ENCODE measurements at regions of chr5 and their contacts with region 1.

Region 1: GRCh38 chr5:174311531-174312269 is 266.2 kb downstream of the NSG2 start:
- DNase-seq: peak; percentile 82
- ATAC-seq: peak; percentile 77
- H3K4me3 Mint-ChIP-seq: no peak overlapping the region
- H3K27ac Mint-ChIP-seq: no peak overlapping the region
- H3K4me1 Mint-ChIP-seq: no peaks in the 10 kb centered on the region
- H3K27me3 Mint-ChIP-seq: peaks cover 27% of the 10 kb centered on the region

Region 2: DNA sequence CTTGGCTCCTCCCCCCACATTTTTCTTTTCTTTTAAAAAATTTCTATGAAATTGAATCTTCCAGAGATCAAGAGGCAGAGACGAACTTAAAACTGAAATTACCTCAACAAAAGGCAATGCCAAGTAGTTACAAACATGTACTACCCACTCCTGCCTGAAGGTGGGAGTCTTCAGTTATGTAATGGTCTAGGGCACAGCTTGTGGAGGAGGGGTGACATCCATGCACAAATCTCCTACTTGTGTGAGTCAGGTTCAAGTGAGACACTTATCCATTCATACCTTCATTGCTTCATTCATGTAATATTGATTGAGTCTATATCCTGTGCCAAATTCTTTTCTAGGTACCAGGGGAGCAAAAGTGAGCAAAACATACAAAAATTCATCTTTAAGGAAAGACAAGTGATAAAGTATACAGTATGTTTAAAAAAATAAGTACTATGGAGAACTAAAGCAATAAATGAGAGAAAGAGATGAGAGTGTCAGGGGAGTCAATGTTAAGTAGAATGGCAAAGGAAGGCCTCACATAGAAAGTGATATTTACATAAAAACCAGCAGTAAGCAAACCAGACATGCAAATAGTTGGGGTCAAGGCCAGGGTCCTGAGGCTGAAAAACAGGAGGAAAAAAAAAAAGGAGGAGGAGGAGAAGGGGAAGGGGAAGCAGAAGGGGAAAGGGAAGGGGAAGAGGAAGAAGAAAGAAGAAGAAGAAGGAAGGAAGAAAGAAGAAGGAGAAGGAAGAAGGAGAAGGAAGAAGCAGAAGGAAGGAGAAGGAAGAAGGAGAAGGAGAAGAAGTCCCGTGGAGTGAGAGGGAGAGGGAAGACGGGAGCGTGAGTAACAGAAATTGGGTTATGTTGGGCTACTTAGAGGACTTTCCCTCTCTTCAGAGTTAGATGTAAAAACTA is 291.1 kb before region 1 on chr5:
- CTCF ChIA-PET with region 1: interaction called, 6 read pairs
- POLR2A ChIA-PET with region 1: no interaction called
- intact Hi-C with region 1: loop called (anchors 1 kb)
- DNase-seq: peak; percentile 38
- ATAC-seq: no peak
- H3K4me3 Mint-ChIP-seq: no peak overlapping the region
- H3K27ac Mint-ChIP-seq: no peak overlapping the region
- H3K4me1 Mint-ChIP-seq: no peaks in the 10 kb centered on the region
- H3K27me3 Mint-ChIP-seq: peaks cover 27% of the 10 kb centered on the region

Region 3: DNA sequence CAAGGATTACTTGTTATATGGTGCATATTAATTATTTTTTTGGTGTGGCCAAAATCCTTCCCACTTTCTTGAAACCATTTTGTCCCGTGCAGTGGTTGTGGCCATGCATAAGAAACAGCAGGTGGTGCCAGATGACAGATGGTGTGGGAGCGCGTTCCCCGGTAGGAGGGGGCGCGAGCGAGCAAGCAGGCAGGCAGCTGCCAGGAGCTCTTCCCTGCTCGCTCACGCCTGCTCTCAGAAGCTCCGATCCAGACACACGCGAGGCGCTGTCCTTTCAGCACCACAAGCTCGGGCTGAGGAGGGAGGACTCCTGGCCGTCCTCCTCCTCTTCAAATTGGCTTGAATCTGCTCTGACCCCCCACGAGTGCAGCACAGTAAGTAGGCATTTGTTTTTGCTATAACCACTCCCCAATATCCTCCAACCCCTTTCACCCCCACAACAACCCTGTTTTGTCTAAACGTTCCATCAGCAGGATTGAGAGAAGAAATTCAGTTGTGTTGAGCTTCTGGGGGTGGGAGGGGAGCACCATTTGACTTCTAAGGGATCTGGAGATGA is 266.2 kb before region 1 on chr5 and contains the start of gene NSG2:
- CTCF ChIA-PET with region 1: interaction called, 9 read pairs
- POLR2A ChIA-PET with region 1: no interaction called
- intact Hi-C with region 1: loop called (anchors 1 to 10 kb)
- DNase-seq: peak; percentile 72
- ATAC-seq: peak; percentile 84
- H3K4me3 Mint-ChIP-seq: no peak within 1 kb of the TSS
- H3K27ac Mint-ChIP-seq: no peak within 1 kb of the TSS
- H3K4me1 Mint-ChIP-seq: no peaks in the 10 kb centered on the region
- H3K27me3 Mint-ChIP-seq: peaks cover 34% of the 10 kb centered on the region
- total RNA-seq, gene NSG2: not detected

Region 4: DNA sequence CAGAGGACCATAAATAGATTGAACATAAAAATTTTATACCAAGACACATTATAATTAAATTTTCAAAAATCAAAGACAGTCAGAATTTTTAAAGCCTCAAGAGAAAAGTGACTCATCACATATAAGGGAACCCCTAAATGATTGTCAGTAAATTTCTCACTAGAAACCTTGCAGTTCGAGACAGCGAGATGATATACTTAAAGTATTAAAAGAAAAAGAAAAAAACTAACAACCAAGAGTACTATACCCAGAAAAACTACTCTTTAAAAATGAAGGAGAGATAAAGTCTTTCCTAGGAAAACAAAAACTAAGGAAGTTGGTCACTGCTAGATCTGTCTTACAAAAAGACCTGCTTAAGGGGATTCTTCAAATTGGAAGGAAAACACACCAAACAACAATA is 161.3 kb after region 1 on chr5:
- CTCF ChIA-PET with region 1: no interaction called
- POLR2A ChIA-PET with region 1: no interaction called
- intact Hi-C with region 1: no loop called
- DNase-seq: no peak
- ATAC-seq: no peak
- H3K4me3 Mint-ChIP-seq: no peak overlapping the region
- H3K27ac Mint-ChIP-seq: no peak overlapping the region
- H3K4me1 Mint-ChIP-seq: no peaks in the 10 kb centered on the region
- H3K27me3 Mint-ChIP-seq: no peaks in the 10 kb centered on the region